Kidney (tissue), 22 donors: ENCODE measurements at regions of chr12 and their contacts with region 1.

Region 1: GRCh38 chr12:132414634-132415326 is 75.2 kb upstream of the FBRSL1 start:
- DNase-seq: peak; percentile 86 to 93 (median 90)
- H3K4me3 ChIP-seq: no peak overlapping the region
- H3K27ac ChIP-seq: no peak overlapping the region
- H3K4me1 ChIP-seq: no peaks in the 10 kb centered on the region
- H3K27me3 ChIP-seq: no peaks in the 10 kb centered on the region
- CTCF ChIP-seq: peak; percentile 85

Region 2: GRCh38 chr12:132470978-132471857 is 56.4 kb after region 1 on chr12:
- intact Hi-C with region 1: no loop called
- DNase-seq: peak in 1 of 5 donors; percentile 45
- H3K4me3 ChIP-seq: no peak overlapping the region
- H3K27ac ChIP-seq: no peak overlapping the region
- H3K4me1 ChIP-seq: no peaks in the 10 kb centered on the region
- H3K27me3 ChIP-seq: no peaks in the 10 kb centered on the region
- CTCF ChIP-seq: no peak

Region 3: GRCh38 chr12:132523576-132524331 is 109.0 kb after region 1 on chr12:
- intact Hi-C with region 1: loop called (anchors 10 kb)
- DNase-seq: peak in 4 of 5 donors; percentile 66 to 86 (median 76)
- H3K4me3 ChIP-seq: no peak overlapping the region
- H3K27ac ChIP-seq: no peak overlapping the region
- H3K4me1 ChIP-seq: peaks cover 0 to 31% (median 0%) of the 10 kb centered on the region in 3 donors
- H3K27me3 ChIP-seq: no peaks in the 10 kb centered on the region
- CTCF ChIP-seq: peak; percentile 60

Region 4: DNA sequence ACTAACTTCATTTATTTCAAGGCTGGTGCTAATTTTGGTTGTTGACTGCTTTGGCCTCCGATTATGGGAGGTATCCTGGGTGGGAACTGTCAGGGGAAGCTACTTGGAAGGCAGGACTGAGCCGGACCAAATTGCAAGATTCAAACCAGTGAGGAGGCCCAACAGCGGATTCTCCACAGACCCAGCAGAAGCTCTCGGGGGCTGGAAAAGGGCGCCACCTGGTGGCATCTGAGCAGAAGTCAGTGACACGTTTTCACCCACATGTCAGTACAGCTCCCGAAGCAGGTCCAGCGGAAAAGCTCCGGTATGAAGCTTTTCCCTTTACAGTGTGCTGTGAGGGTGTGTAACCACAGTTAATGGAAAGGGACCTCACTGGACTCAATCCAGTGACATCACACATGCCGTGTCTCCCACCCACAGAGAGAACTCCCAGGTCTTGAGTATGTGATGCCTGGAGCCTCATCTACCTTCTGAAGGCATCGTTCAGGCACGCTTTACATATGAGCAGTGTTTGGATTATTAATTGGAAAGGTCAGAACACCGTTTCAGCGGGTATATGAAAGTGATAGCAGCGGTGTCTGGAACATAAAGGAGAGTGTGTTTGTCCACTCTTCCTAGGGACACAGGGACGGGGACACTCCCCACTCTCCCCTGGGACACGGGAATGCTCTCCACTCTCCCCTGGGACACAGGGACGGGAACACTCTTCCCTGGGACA is 200.2 kb after region 1 on chr12:
- intact Hi-C with region 1: loop called (anchors 10 kb)
- DNase-seq: peak; percentile 87 to 93 (median 89)
- H3K4me3 ChIP-seq: no peak overlapping the region
- H3K27ac ChIP-seq: no peak overlapping the region
- H3K4me1 ChIP-seq: no peaks in the 10 kb centered on the region
- H3K27me3 ChIP-seq: peaks cover 9% of the 10 kb centered on the region
- CTCF ChIP-seq: peak; percentile 86